ENCODE measurements at regions of chr15 and their contacts with region 1.

Region 1: GRCh38 chr15:89430530-89431341 is 65.6 kb downstream of the RHCG start:
- DNase-seq: peak; percentile 90
- H3K4me3 ChIP-seq: peak overlapping the region; percentile 13 to 50 (median 23)
- H3K27ac ChIP-seq: no peak overlapping the region
- H3K4me1 ChIP-seq: peaks cover 0 to 9% (median 5%) of the 10 kb centered on the region in 4 donors
- H3K27me3 ChIP-seq: peaks cover 29% of the 10 kb centered on the region
- CTCF ChIP-seq: peak; percentile 96 to 99 (median 98)
- EP300 ChIP-seq: no peak
- POLR2A ChIP-seq: no peak

Region 2: DNA sequence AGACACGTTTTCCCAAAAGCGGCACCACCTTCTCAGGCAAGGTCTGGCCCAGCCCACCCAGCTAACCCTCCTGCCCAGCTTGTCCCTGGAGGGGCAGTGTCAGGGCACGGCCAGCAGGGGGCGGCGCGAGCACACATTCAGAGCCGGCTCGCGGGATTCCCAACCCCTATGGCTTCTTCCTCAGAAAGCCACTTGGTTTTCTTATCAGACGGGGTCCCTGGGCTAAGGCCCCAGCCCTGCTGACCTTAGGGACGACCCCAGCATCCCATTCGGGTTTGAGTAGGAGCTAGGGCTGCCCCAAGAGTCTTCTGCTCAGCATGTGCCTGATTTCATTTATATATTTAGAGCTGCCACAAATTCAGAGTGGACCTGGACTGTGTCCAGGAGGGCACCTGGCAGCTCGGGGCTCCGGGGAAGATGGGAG is 223.8 kb before region 1 on chr15:
- in situ Hi-C with region 1: loop called in 1 of 4 experiments (anchors 25 kb)
- intact Hi-C with region 1: no loop called
- DNase-seq: peak; percentile 80
- H3K4me3 ChIP-seq: peak overlapping the region in 2 of 4 donors; percentile 9 to 25
- H3K27ac ChIP-seq: no peak overlapping the region
- H3K4me1 ChIP-seq: peaks cover 0 to 22% (median 7%) of the 10 kb centered on the region in 4 donors
- H3K27me3 ChIP-seq: no peaks in the 10 kb centered on the region
- CTCF ChIP-seq: peak; percentile 92 to 99 (median 96)
- EP300 ChIP-seq: no peak
- POLR2A ChIP-seq: no peak

Region 3: GRCh38 chr15:89358755-89359439 is 71.8 kb before region 1 on chr15:
- in situ Hi-C with region 1: loop called in 2 of 4 experiments (anchors 5 to 10 kb)
- intact Hi-C with region 1: loop called (anchors 1 kb)
- DNase-seq: peak; percentile 79
- H3K4me3 ChIP-seq: peak overlapping the region; percentile 15 to 52 (median 34)
- H3K27ac ChIP-seq: no peak overlapping the region
- H3K4me1 ChIP-seq: peaks cover 9 to 23% (median 19%) of the 10 kb centered on the region in 4 donors
- H3K27me3 ChIP-seq: peaks cover 94% of the 10 kb centered on the region
- CTCF ChIP-seq: peak; percentile 97 to 99 (median 99)
- EP300 ChIP-seq: no peak
- POLR2A ChIP-seq: no peak

Region 4: GRCh38 chr15:90031231-90031791 is 600.6 kb after region 1 on chr15:
- in situ Hi-C with region 1: no loop called
- intact Hi-C with region 1: no loop called
- DNase-seq: peak; percentile 44
- H3K4me3 ChIP-seq: no peak overlapping the region
- H3K27ac ChIP-seq: peak overlapping the region; percentile 62 to 90 (median 84)
- H3K4me1 ChIP-seq: peaks cover 21 to 84% (median 63%) of the 10 kb centered on the region in 4 donors
- H3K27me3 ChIP-seq: no peaks in the 10 kb centered on the region
- CTCF ChIP-seq: no peak
- EP300 ChIP-seq: no peak
- POLR2A ChIP-seq: no peak